G401 (cell line): ENCODE measurements at regions of chr11 and their contacts with region 1.

Region 1: GRCh38 chr11:107801641-107802040 is 56.9 kb downstream of the SLC35F2 start:
- DNase-seq: no peak

Region 2: GRCh38 chr11:107683807-107684206 is 117.8 kb before region 1 on chr11:
- in situ Hi-C with region 1: no loop called
- DNase-seq: no peak

Region 3: DNA sequence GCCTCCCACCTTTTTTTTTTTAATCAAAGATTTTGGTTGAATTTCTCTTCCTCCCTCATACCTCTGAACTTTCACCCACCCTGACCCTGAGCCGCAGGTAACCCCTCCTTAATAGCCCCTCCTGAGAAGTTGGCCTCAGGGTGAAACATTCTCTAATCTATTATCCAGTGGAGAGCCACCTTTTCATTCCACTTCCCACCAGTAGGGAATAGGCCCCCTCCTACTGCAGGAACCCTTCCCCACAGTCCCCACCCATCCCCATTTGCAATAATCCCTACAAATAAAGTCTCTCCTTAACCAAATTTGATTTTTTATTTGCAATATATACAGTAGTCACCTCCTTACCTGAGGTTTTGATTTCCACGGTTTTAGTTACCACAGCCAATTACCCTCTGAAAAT is 59.0 kb after region 1 on chr11:
- in situ Hi-C with region 1: loop called (anchors 5 kb)
- DNase-seq: no peak

Region 4: DNA sequence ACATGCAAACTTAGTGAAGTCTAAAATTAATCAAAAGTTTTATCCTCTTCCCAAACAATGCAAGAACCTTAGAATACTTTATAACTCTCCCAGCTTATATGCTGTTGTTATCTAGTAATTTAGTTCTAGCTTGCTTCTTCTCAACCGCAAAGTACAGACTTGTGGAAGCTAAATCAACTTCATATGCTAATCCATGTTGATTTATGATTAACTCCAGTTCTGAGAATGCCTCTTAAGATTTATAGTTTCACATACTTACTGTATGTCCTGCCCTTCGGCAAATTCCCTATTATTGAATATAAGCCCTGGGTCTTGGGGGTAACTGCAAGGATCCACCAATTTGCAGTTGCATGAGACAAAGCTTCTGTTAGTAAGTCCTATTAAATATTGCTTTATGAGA is 74.5 kb after region 1 on chr11:
- in situ Hi-C with region 1: no loop called
- DNase-seq: no peak